ENCODE measurements at regions of chr16 and their contacts with region 1.

Region 1: GRCh38 chr16:30417529-30418349 is 10.3 kb downstream of the ZNF771 start:
- DNase-seq: peak; percentile 89 to 93 (median 91)
- H3K4me3 ChIP-seq: peak overlapping the region; percentile 12 to 68
- H3K4me3 Mint-ChIP-seq: peak overlapping the region; percentile 39 to 85 (median 68)
- H3K27ac ChIP-seq: peak overlapping the region; percentile 61
- H3K27ac Mint-ChIP-seq: peak overlapping the region in 3 of 7 donors; percentile 41 to 90 (median 74)
- H3K4me1 ChIP-seq: peaks cover 15% of the 10 kb centered on the region
- H3K4me1 Mint-ChIP-seq: peaks cover 6 to 24% (median 13%) of the 10 kb centered on the region in 4 donors
- H3K27me3 ChIP-seq: no peaks in the 10 kb centered on the region
- H3K27me3 Mint-ChIP-seq: no peaks in the 10 kb centered on the region

Region 2: DNA sequence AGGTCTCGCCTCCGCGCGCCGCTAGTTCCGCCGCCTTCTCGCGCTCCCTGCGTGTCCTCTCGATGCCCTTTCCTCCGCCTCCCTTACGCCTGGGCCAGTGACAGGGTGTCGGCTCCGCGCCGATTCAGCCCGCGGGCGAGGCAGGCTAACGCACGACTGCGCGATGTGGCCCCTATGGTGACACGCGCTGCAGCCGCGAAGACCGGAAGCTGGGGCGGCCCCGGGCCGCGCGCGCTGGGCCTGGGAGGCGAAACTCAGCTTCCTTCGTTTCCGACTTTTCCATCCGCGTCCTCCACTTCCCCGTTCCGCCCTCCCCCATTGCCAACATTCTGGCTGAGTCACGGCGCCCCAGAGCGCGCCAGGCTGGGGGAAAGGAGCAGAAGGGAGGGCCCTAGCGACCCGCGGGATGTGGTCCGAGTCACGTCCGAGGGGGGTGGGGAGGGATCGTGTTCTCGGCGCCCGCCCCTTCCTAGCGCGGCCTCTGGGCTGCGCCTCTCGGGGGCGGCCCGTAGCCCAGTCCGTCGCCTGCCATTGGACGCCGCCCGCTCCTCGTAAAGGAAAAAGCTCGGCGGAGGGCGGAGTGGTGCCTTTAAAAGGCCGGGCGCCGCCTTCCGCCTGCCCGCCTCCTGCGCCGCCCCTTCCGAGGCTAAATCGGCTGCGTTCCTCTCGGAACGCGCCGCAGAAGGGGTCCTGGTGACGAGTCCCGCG is 352.4 kb before region 1 on chr16 and contains the start of gene ALDOA:
- CTCF ChIA-PET with region 1: no interaction called
- POLR2A ChIA-PET with region 1: interaction called, 29 read pairs
- intact Hi-C with region 1: no loop called
- DNase-seq: peak; percentile 94 to 96 (median 94)
- H3K4me3 ChIP-seq: peak within 1 kb of the TSS; percentile 77 to 93
- H3K4me3 Mint-ChIP-seq: peak within 1 kb of the TSS; percentile 98 to 100 (median 99)
- H3K27ac ChIP-seq: peak within 1 kb of the TSS; percentile 94
- H3K27ac Mint-ChIP-seq: peak within 1 kb of the TSS; percentile 95 to 100 (median 97)
- H3K4me1 ChIP-seq: peaks cover 47% of the 10 kb centered on the region
- H3K4me1 Mint-ChIP-seq: peaks cover 17 to 58% (median 33%) of the 10 kb centered on the region in 4 donors
- H3K27me3 ChIP-seq: no peaks in the 10 kb centered on the region
- H3K27me3 Mint-ChIP-seq: no peaks in the 10 kb centered on the region
- total RNA-seq, gene ALDOA: 558 to 563 TPM

Region 3: GRCh38 chr16:30370444-30371247 is 47.1 kb before region 1 on chr16 and contains the start of gene TBC1D10B:
- CTCF ChIA-PET with region 1: interaction called, 9 read pairs
- POLR2A ChIA-PET with region 1: interaction called, 34 read pairs
- intact Hi-C with region 1: no loop called
- DNase-seq: peak; percentile 99 to 100 (median 100)
- H3K4me3 ChIP-seq: peak within 1 kb of the TSS; percentile 67 to 88
- H3K4me3 Mint-ChIP-seq: peak within 1 kb of the TSS; percentile 87 to 94 (median 90)
- H3K27ac ChIP-seq: peak within 1 kb of the TSS; percentile 72
- H3K27ac Mint-ChIP-seq: peak within 1 kb of the TSS; percentile 83 to 99 (median 95)
- H3K4me1 ChIP-seq: peaks cover 46% of the 10 kb centered on the region
- H3K4me1 Mint-ChIP-seq: peaks cover 43 to 60% (median 49%) of the 10 kb centered on the region in 4 donors
- H3K27me3 ChIP-seq: no peaks in the 10 kb centered on the region
- H3K27me3 Mint-ChIP-seq: peaks cover 0 to 2% of the 10 kb centered on the region in 2 donors
- total RNA-seq, gene TBC1D10B: 47.0 to 55.3 TPM

Region 4: GRCh38 chr16:30395155-30395991 is 22.4 kb before region 1 on chr16 and contains the start of gene ZNF48:
- CTCF ChIA-PET with region 1: interaction called, 7 read pairs
- POLR2A ChIA-PET with region 1: interaction called, 13 read pairs
- intact Hi-C with region 1: no loop called
- DNase-seq: peak in 4 of 5 donors; percentile 44 to 65 (median 53)
- H3K4me3 ChIP-seq: peak within 1 kb of the TSS; percentile 18 to 73
- H3K4me3 Mint-ChIP-seq: peak within 1 kb of the TSS; percentile 83 to 96 (median 89)
- H3K27ac ChIP-seq: peak within 1 kb of the TSS; percentile 56
- H3K27ac Mint-ChIP-seq: peak within 1 kb of the TSS; percentile 58 to 92 (median 84)
- H3K4me1 ChIP-seq: peaks cover 32% of the 10 kb centered on the region
- H3K4me1 Mint-ChIP-seq: peaks cover 15 to 39% (median 26%) of the 10 kb centered on the region in 4 donors
- H3K27me3 ChIP-seq: no peaks in the 10 kb centered on the region
- H3K27me3 Mint-ChIP-seq: no peaks in the 10 kb centered on the region
- total RNA-seq, gene ZNF48: 15.8 to 16.7 TPM

Region 5: DNA sequence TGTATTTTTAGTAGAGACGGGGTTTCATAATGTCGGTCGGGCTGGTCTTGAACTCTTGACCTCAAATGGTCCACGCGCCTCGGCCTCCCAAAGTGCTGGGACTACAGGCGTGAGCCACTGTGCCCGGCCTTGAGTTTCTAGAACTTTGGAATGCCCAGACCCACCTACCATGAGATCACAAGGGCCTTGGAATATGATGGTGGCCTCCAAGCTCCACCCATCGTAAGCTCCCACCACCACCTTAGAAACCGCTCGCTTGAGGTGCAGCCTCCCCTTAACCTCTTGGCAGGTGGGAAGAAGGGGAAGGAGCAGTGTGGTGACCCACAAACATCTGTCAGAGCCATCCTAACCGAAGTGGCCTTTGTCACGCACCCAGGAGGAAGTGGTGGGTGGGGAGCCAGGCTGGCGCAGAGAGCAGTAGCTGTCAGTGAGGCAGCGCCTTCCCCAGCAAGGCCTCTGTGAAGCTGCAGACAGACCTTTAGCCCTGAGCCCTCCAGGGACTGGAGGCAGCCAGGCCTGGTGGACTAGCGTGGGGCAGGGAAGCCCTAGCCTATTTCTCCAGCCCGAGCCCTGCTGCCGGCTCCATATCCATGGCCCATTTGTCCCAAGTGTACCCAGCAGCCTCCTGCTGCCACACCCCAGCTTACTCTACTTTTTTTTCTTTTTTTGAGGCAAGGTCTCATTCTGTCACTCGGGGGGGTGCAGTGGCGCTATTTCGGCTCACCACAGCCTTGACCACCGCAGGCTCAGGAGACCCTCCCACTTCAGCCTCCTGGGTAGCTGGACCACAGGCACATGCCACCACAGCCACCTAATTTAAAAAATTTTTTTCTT is 41.0 kb after region 1 on chr16:
- CTCF ChIA-PET with region 1: no interaction called
- POLR2A ChIA-PET with region 1: interaction called, 18 read pairs
- intact Hi-C with region 1: no loop called
- DNase-seq: peak; percentile 72 to 85 (median 76)
- H3K4me3 ChIP-seq: peak overlapping the region in 1 of 2 donors; percentile 19
- H3K4me3 Mint-ChIP-seq: peak overlapping the region; percentile 64 to 81 (median 70)
- H3K27ac ChIP-seq: peak overlapping the region; percentile 48
- H3K27ac Mint-ChIP-seq: peak overlapping the region; percentile 87 to 95 (median 89)
- H3K4me1 ChIP-seq: peaks cover 35% of the 10 kb centered on the region
- H3K4me1 Mint-ChIP-seq: peaks cover 18 to 49% (median 31%) of the 10 kb centered on the region in 4 donors
- H3K27me3 ChIP-seq: no peaks in the 10 kb centered on the region
- H3K27me3 Mint-ChIP-seq: no peaks in the 10 kb centered on the region

Region 6: GRCh38 chr16:30557957-30558788 is 140.4 kb after region 1 on chr16 and contains the start of gene ZNF764:
- CTCF ChIA-PET with region 1: no interaction called
- POLR2A ChIA-PET with region 1: interaction called, 22 read pairs
- intact Hi-C with region 1: no loop called
- DNase-seq: peak; percentile 94 to 98 (median 96)
- H3K4me3 ChIP-seq: peak within 1 kb of the TSS; percentile 58 to 75
- H3K4me3 Mint-ChIP-seq: peak within 1 kb of the TSS; percentile 88 to 94 (median 92)
- H3K27ac ChIP-seq: peak within 1 kb of the TSS; percentile 95
- H3K27ac Mint-ChIP-seq: peak within 1 kb of the TSS; percentile 93 to 97 (median 95)
- H3K4me1 ChIP-seq: peaks cover 54% of the 10 kb centered on the region
- H3K4me1 Mint-ChIP-seq: peaks cover 19 to 55% (median 37%) of the 10 kb centered on the region in 4 donors
- H3K27me3 ChIP-seq: no peaks in the 10 kb centered on the region
- H3K27me3 Mint-ChIP-seq: no peaks in the 10 kb centered on the region
- total RNA-seq, gene ZNF764: 28.9 to 29.3 TPM

Region 7: GRCh38 chr16:30650369-30651123 is 232.8 kb after region 1 on chr16 and contains the start of gene PRR14:
- CTCF ChIA-PET with region 1: no interaction called
- POLR2A ChIA-PET with region 1: interaction called, 14 read pairs
- intact Hi-C with region 1: no loop called
- DNase-seq: peak; percentile 96 to 99 (median 97)
- H3K4me3 ChIP-seq: peak within 1 kb of the TSS; percentile 99
- H3K4me3 Mint-ChIP-seq: peak within 1 kb of the TSS; percentile 95 to 100 (median 99)
- H3K27ac ChIP-seq: peak within 1 kb of the TSS; percentile 96
- H3K27ac Mint-ChIP-seq: peak within 1 kb of the TSS; percentile 97 to 100 (median 99)
- H3K4me1 ChIP-seq: peaks cover 20% of the 10 kb centered on the region
- H3K4me1 Mint-ChIP-seq: peaks cover 11 to 32% (median 18%) of the 10 kb centered on the region in 4 donors
- H3K27me3 ChIP-seq: no peaks in the 10 kb centered on the region
- H3K27me3 Mint-ChIP-seq: peaks cover 0 to 2% of the 10 kb centered on the region in 2 donors
- total RNA-seq, gene PRR14: 92.0 to 100 TPM